Left ventricle myocardium superior (tissue), 1 donor: ENCODE measurements at regions of chr7 and their contacts with region 1.

Region 1: GRCh38 chr7:116984917-116985316 is 31.6 kb downstream of the ST7 start:
- DNase-seq: no peak
- ATAC-seq: peak; percentile 54

Region 2: GRCh38 chr7:116687801-116688201 is 297.1 kb before region 1 on chr7:
- intact Hi-C with region 1: no loop called
- DNase-seq: no peak
- ATAC-seq: no peak

Region 3: DNA sequence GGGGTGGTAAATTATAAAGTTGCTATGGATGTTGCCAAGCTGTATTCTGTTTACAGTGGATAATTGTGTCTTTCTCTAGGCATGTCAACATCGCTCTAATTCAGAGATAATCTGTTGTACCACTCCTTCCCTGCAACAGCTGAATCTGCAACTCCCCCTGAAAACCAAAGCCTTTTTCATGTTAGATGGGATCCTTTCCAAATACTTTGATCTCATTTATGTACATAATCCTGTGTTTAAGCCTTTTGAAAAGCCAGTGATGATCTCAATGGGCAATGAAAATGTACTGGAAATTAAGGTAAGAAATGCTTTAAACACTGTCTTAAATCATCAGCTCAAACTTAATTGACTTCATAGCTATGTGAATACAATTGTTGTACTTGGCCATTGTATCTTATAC is 221.9 kb before region 1 on chr7:
- intact Hi-C with region 1: no loop called
- DNase-seq: no peak
- ATAC-seq: no peak

Region 4: GRCh38 chr7:116929914-116930913 is 54.7 kb before region 1 on chr7:
- intact Hi-C with region 1: loop called (anchors 5 kb)
- DNase-seq: peak; percentile 87
- ATAC-seq: peak; percentile 90

Region 5: GRCh38 chr7:117119192-117119924 is 134.4 kb after region 1 on chr7:
- intact Hi-C with region 1: loop called (anchors 5 kb)
- DNase-seq: peak; percentile 80
- ATAC-seq: peak; percentile 55